ENCODE measurements at regions of chr1 and their contacts with region 1.

Region 1: DNA sequence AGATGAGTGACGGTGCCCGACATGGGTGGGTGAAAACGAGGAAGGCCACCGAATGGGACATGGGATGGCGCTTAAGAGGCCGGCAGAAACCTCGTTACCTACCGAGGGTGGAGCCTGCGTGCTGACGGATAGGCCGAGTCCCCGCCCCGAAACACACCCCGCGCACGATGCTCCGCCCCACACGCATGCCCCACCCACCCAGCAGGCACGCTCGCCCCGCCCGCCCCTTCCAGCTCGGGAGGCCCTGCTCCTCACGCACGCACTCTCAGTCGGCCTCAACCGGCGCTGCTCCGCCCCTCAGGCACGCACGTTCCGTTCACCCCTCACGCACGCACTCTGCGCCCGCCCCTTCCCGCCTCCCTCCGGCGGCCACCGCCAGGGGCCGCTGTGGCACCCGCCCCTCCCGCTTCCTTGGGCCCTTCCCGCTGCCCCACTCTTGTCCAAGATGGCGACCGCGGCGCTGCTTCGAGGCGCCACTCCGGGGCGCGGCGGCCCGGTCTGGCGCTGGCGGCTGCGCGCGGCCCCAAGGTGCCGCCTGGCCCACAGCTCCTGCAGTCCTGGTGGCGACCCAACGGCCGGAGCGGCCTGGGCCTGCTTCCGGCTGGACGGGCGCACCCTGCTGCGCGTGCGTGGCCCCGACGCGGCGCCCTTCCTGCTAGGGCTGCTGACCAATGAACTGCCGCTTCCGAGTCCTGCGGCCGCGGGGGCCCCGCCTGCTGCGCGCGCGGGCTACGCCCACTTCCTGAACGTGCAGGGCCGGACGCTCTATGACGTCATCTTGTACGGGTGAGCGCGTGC is at the start of gene IBA57:
- DNase-seq: peak; percentile 99 to 100 (median 100)
- ATAC-seq: peak; percentile 82 to 88 (median 86)
- H3K4me3 ChIP-seq: peak within 1 kb of the TSS; percentile 68 to 75
- H3K4me3 Mint-ChIP-seq: peak within 1 kb of the TSS; percentile 79 to 84 (median 81)
- H3K27ac ChIP-seq: peak within 1 kb of the TSS; percentile 97
- H3K27ac Mint-ChIP-seq: peak within 1 kb of the TSS; percentile 90 to 97
- H3K4me1 ChIP-seq: peaks cover 8 to 45% of the 10 kb centered on the region in 2 experiments
- H3K4me1 Mint-ChIP-seq: peaks cover 51 to 53% (median 53%) of the 10 kb centered on the region in 3 donors
- H3K27me3 ChIP-seq: peaks cover 0 to under 1% of the 10 kb centered on the region in 2 experiments
- H3K27me3 Mint-ChIP-seq: no peaks in the 10 kb centered on the region
- total RNA-seq, gene IBA57: 10.6 to 18.3 (median 12.6) TPM

Region 2: GRCh38 chr1:227766015-227766630 is 399.4 kb before region 1 on chr1:
- CTCF ChIA-PET with region 1: no interaction called
- POLR2A ChIA-PET with region 1: interaction called in 1 of 2 experiments, 11 read pairs
- DNase-seq: peak; percentile 64 to 88 (median 78)
- ATAC-seq: peak; percentile 80 to 88 (median 88)
- H3K4me3 ChIP-seq: peak overlapping the region; percentile 18 to 30
- H3K4me3 Mint-ChIP-seq: peak overlapping the region; percentile 57 to 77 (median 62)
- H3K27ac ChIP-seq: peak overlapping the region; percentile 71
- H3K27ac Mint-ChIP-seq: peak overlapping the region; percentile 91 to 95
- H3K4me1 ChIP-seq: peaks cover 45 to 72% of the 10 kb centered on the region in 2 experiments
- H3K4me1 Mint-ChIP-seq: peaks cover 69 to 78% (median 72%) of the 10 kb centered on the region in 3 donors
- H3K27me3 ChIP-seq: no peaks in the 10 kb centered on the region
- H3K27me3 Mint-ChIP-seq: no peaks in the 10 kb centered on the region

Region 3: GRCh38 chr1:228120857-228121489 is 44.6 kb before region 1 on chr1:
- CTCF ChIA-PET with region 1: interaction called in 1 of 2 experiments, 11 read pairs
- POLR2A ChIA-PET with region 1: no interaction called
- DNase-seq: no peak
- ATAC-seq: peak in 1 of 4 experiments; percentile 67
- H3K4me3 ChIP-seq: no peak overlapping the region
- H3K4me3 Mint-ChIP-seq: no peak overlapping the region
- H3K27ac ChIP-seq: no peak overlapping the region
- H3K27ac Mint-ChIP-seq: peak overlapping the region in 1 of 2 donors; percentile 11
- H3K4me1 ChIP-seq: no peaks in the 10 kb centered on the region
- H3K4me1 Mint-ChIP-seq: peaks cover 0 to 5% (median 0%) of the 10 kb centered on the region in 3 donors
- H3K27me3 ChIP-seq: peaks cover 0 to 2% of the 10 kb centered on the region in 2 experiments
- H3K27me3 Mint-ChIP-seq: peaks cover 0 to 2% of the 10 kb centered on the region in 2 donors

Region 4: DNA sequence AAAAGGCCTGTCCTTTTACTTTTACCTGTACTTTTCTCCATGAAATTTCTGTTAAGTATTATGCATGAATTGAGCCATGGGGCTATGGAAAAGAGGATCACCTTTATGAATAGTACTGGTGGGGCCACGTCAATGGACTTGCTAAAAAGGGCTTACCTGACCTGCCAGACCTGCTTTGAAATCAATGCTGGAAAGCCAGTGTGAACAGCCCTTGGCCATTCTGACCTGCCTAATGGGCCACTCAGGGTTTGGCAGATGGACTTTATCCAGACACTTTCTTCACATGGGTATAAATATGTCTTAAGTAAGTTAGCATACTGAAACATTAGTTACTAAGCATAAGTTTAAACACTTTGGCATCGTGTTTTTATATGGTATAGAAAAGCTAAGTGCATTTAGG is 33.8 kb before region 1 on chr1:
- CTCF ChIA-PET with region 1: interaction called in 1 of 2 experiments, 19 read pairs
- POLR2A ChIA-PET with region 1: interaction called in 1 of 2 experiments, 10 read pairs
- DNase-seq: no peak
- ATAC-seq: no peak
- H3K4me3 ChIP-seq: no peak overlapping the region
- H3K4me3 Mint-ChIP-seq: no peak overlapping the region
- H3K27ac ChIP-seq: no peak overlapping the region
- H3K27ac Mint-ChIP-seq: no peak overlapping the region
- H3K4me1 ChIP-seq: peaks cover under 1 to 4% of the 10 kb centered on the region in 2 experiments
- H3K4me1 Mint-ChIP-seq: peaks cover 7 to 9% (median 8%) of the 10 kb centered on the region in 3 donors
- H3K27me3 ChIP-seq: peaks cover 0 to 20% of the 10 kb centered on the region in 2 experiments
- H3K27me3 Mint-ChIP-seq: peaks cover 4 to 39% of the 10 kb centered on the region in 2 donors

Region 5: GRCh38 chr1:228139944-228140656 is 25.5 kb before region 1 on chr1 and contains the start of gene GUK1:
- CTCF ChIA-PET with region 1: interaction called in 1 of 2 experiments, 15 read pairs
- POLR2A ChIA-PET with region 1: interaction called, 5 to 10 read pairs
- DNase-seq: peak; percentile 99 to 100 (median 100)
- ATAC-seq: peak; percentile 87 to 96 (median 92)
- H3K4me3 ChIP-seq: peak within 1 kb of the TSS; percentile 85 to 97
- H3K4me3 Mint-ChIP-seq: peak within 1 kb of the TSS; percentile 94 to 96 (median 95)
- H3K27ac ChIP-seq: peak within 1 kb of the TSS; percentile 98
- H3K27ac Mint-ChIP-seq: peak within 1 kb of the TSS; percentile 96 to 98
- H3K4me1 ChIP-seq: peaks cover 12 to 65% of the 10 kb centered on the region in 2 experiments
- H3K4me1 Mint-ChIP-seq: peaks cover 41 to 49% (median 47%) of the 10 kb centered on the region in 3 donors
- H3K27me3 ChIP-seq: no peaks in the 10 kb centered on the region
- H3K27me3 Mint-ChIP-seq: peaks cover 0 to 4% of the 10 kb centered on the region in 2 donors
- total RNA-seq, gene GUK1: 201 to 318 (median 223) TPM

Measured in T-cell (primary cell).